ENCODE measurements at regions of chr6 and their contacts with region 1.

Region 1: GRCh38 chr6:16639684-16640480 is 121.4 kb downstream of the ATXN1 start:
- DNase-seq: no peak
- ATAC-seq: no peak
- H3K4me3 Mint-ChIP-seq: peak overlapping the region; percentile 38
- H3K27ac Mint-ChIP-seq: peak overlapping the region; percentile 30
- H3K4me1 Mint-ChIP-seq: peaks cover 16% of the 10 kb centered on the region
- H3K27me3 Mint-ChIP-seq: no peaks in the 10 kb centered on the region
- CTCF ChIP-seq: no peak

Region 2: DNA sequence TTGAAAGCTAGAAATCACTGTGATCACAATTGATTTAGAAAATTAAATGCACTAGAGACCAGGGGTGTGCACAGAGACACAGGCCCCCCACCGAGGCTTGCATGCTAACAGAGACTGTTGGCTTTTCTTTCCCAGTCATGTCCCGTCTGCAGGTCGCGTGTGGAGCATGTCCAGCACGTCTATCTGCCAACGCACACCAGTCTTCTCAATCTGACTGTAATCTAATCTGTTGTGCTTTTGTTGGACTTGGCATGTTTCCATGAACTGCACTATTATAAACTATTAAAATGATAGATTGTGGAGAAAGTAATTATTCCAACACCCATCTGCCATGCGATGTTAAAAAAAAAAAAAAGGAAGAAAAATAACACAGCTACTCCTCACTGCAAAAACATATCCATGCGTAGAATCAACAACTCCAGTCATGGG is 493.3 kb before region 1 on chr6:
- CTCF ChIA-PET with region 1: no interaction called
- POLR2A ChIA-PET with region 1: no interaction called
- intact Hi-C with region 1: no loop called
- DNase-seq: no peak
- ATAC-seq: no peak
- H3K4me3 Mint-ChIP-seq: no peak overlapping the region
- H3K27ac Mint-ChIP-seq: no peak overlapping the region
- H3K4me1 Mint-ChIP-seq: peaks cover 1% of the 10 kb centered on the region
- H3K27me3 Mint-ChIP-seq: no peaks in the 10 kb centered on the region
- CTCF ChIP-seq: no peak

Region 3: DNA sequence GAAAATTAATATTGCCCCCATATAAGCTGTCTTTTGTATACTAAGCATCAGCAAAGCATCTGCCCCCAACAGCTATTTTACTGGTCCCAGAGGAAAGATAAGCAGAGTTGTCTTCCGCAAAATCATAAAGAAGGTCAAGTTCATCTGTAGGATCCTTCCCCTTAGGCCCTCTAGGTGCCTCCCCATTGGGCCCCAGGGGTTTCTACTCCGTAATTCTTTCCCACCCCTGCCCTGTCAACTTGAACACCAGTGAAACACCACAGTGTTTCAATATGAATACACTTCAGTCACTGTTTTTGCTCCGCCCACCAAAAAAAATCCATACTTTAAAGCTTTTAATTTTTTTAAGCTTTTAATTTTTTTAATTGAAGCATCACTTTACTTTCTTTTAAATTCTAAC is 37.8 kb before region 1 on chr6:
- CTCF ChIA-PET with region 1: no interaction called
- POLR2A ChIA-PET with region 1: interaction called, 4 read pairs
- intact Hi-C with region 1: loop called (anchors 5 kb)
- DNase-seq: no peak
- ATAC-seq: peak; percentile 99
- H3K4me3 Mint-ChIP-seq: peak overlapping the region; percentile 12
- H3K27ac Mint-ChIP-seq: no peak overlapping the region
- H3K4me1 Mint-ChIP-seq: peaks cover 29% of the 10 kb centered on the region
- H3K27me3 Mint-ChIP-seq: no peaks in the 10 kb centered on the region
- CTCF ChIP-seq: no peak

Region 4: DNA sequence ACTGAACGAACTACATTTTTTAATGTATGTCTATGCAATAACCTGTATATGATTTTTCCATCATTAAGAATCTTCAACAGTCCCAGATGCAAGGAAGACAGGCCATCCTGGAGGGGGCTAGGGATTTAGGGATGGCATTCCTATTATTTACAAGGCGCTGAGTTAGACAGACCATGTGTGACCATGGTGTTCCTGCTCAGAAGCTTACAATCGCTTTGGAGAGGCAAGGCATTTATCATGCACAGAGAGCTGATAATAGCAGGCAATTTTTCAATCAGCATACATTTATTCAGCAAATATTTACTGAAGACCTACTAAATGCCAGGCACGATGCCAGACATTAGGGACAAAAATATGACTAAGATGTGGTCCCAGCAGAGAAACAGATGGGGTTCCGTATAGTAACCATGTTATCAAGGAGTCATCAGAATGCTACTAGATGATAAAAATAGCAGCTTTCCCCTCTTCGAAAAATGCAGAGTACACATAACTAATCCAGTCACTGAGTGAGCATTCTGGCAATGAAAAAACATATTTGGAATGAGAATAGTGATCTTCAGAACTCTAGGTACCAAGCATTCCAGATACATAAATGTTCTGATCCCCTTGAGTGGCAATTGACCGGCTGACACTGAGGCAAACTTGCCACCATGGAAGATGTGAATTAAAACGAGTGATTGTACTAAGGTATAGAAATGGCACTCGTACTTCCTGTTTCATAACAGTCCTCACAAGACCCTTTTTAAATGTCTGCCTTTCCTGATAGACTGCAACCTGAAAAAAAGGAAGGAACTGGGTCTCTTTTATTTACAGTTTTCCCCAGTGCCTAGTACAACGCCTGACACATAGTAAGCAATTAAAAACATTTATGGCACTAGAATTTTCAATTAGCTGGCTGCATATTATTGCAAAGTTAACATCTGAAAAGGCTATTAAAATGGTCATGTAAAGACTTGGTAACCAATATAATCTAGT is 14.3 kb before region 1 on chr6:
- CTCF ChIA-PET with region 1: no interaction called
- POLR2A ChIA-PET with region 1: no interaction called
- intact Hi-C with region 1: no loop called
- DNase-seq: no peak
- ATAC-seq: no peak
- H3K4me3 Mint-ChIP-seq: no peak overlapping the region
- H3K27ac Mint-ChIP-seq: no peak overlapping the region
- H3K4me1 Mint-ChIP-seq: peaks cover 38% of the 10 kb centered on the region
- H3K27me3 Mint-ChIP-seq: no peaks in the 10 kb centered on the region
- CTCF ChIP-seq: no peak

Region 5: DNA sequence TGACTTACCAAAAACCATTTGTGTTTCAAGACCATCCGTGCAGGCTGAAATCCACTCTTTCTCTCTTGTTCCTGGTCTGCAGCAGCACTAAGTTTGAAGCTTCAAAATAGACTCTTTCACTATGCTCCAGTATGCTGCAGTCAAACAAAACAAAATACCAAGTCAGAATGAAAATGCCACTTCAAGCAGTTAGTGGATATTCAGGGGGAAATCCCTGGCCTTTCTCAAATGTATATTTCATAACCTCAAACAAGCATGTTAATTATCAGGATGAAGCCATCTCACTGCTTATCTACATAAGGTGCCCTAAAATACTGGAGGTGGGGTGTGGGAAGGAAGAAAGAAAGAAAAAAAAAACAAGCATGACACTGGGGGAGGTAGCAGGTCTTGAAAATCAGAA is 17.9 kb after region 1 on chr6:
- CTCF ChIA-PET with region 1: no interaction called
- POLR2A ChIA-PET with region 1: interaction called, 6 read pairs
- intact Hi-C with region 1: loop called (anchors 2 kb)
- DNase-seq: no peak
- ATAC-seq: peak; percentile 57
- H3K4me3 Mint-ChIP-seq: peak overlapping the region; percentile 45
- H3K27ac Mint-ChIP-seq: no peak overlapping the region
- H3K4me1 Mint-ChIP-seq: peaks cover 36% of the 10 kb centered on the region
- H3K27me3 Mint-ChIP-seq: no peaks in the 10 kb centered on the region
- CTCF ChIP-seq: no peak

Region 6: DNA sequence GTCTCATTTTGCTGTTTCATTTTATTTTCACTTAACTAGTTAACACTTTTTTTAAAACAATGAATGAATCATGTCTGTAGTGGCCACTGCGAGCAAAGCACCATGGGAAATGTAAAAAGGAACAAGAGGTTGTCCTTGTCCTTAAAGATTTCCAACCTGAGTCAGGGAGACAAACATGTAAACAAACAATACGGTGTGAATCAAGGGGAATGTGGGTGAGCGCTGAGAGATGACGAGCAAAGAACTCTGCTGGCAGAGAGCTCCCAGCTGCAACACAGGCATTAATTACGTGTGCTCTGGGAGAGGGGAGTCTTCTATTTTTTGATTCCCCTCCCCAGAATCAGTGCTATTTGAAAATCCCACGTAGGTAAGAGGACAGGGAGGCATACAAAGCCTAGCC is 37.1 kb after region 1 on chr6:
- CTCF ChIA-PET with region 1: no interaction called
- POLR2A ChIA-PET with region 1: no interaction called
- intact Hi-C with region 1: no loop called
- DNase-seq: no peak
- ATAC-seq: no peak
- H3K4me3 Mint-ChIP-seq: no peak overlapping the region
- H3K27ac Mint-ChIP-seq: no peak overlapping the region
- H3K4me1 Mint-ChIP-seq: no peaks in the 10 kb centered on the region
- H3K27me3 Mint-ChIP-seq: no peaks in the 10 kb centered on the region
- CTCF ChIP-seq: no peak